ENCODE measurements at regions of chr16 and their contacts with region 1.

Region 1: GRCh38 chr16:19086322-19087199 is 19.1 kb downstream of the COQ7 start:
- DNase-seq: peak; percentile 83 to 88
- H3K4me3 ChIP-seq: peak overlapping the region; percentile 38 to 45
- H3K27ac ChIP-seq: no peak overlapping the region
- H3K4me1 ChIP-seq: peaks cover 0 to 12% (median 8%) of the 10 kb centered on the region in 4 donors
- H3K27me3 ChIP-seq: no peaks in the 10 kb centered on the region
- CTCF ChIP-seq: peak; percentile 97 to 100

Region 2: DNA sequence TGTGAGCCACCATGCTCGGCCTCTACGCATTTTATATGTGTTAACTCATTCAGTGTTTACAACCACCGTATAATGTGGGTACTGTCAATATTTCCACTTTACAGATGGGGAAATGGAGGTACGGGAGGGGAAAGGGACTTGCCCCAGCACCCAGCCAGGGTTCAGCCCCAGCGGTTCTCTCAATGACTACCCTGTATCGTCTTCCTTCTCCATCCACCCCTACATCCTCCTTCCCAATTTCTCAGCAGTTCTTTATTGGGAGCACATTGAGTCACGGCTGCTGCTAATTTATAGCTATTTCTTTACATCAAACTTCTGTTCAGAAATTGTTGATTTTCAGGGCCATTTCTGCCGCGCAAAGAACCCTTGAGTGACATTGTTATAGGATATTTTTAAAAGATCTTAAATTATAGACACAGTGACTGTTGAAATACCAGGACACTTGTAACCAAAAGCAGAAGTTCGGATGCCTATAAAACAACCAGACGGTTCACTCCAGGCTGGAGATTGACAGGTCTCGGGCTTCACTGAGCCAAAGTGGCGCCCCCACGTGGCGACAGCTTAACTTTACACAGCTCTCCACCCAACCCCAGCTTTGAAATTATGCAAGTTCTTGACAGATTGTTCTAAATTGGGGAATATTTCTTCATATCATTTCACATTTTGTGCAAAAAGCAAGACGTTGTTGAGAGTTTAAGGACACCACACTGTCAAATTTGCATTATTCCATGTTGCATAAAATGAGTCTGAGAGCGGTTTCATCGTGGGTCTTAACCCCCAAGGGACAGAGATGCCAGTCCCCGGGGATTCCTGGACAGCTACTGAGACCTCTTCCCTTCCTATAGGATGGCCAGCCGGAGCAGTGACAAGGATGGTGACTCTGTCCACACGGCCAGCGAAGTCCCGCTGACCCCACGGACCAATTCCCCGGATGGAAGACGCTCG is 93.3 kb after region 1 on chr16:
- intact Hi-C with region 1: loop called (anchors 5 kb)
- DNase-seq: peak; percentile 44 to 72
- H3K4me3 ChIP-seq: no peak overlapping the region
- H3K27ac ChIP-seq: no peak overlapping the region
- H3K4me1 ChIP-seq: peaks cover 0 to 7% (median 0%) of the 10 kb centered on the region in 4 donors
- H3K27me3 ChIP-seq: peaks cover 0 to 3% of the 10 kb centered on the region in 2 donors
- CTCF ChIP-seq: peak; percentile 37 to 43

Region 3: GRCh38 chr16:19363740-19364139 is 277.2 kb after region 1 on chr16:
- intact Hi-C with region 1: no loop called
- DNase-seq: no peak
- H3K4me3 ChIP-seq: no peak overlapping the region
- H3K27ac ChIP-seq: no peak overlapping the region
- H3K4me1 ChIP-seq: no peaks in the 10 kb centered on the region
- H3K27me3 ChIP-seq: peaks cover 0 to 8% of the 10 kb centered on the region in 2 donors
- CTCF ChIP-seq: no peak

Region 4: DNA sequence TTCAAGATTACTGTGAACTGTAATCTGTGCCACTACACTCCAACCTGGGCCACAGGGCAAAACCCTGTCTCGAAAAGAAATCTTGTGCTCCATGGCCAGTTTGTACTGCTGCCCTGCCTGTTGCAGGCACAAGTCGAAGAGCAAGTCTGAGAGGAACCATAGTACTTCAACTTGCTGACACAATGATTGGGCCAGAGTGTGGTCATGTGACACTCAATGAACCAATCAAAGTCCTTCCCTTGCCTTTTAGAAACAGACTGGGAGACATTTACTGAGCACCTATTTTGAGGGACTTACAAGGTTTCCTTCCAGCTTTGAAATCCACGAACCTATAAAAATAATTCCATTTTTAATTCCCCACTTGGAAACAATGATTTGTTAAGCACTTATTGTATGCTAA is 291.3 kb after region 1 on chr16:
- intact Hi-C with region 1: loop called (anchors 2 kb)
- DNase-seq: no peak
- H3K4me3 ChIP-seq: no peak overlapping the region
- H3K27ac ChIP-seq: no peak overlapping the region
- H3K4me1 ChIP-seq: no peaks in the 10 kb centered on the region
- H3K27me3 ChIP-seq: no peaks in the 10 kb centered on the region
- CTCF ChIP-seq: no peak

Region 5: DNA sequence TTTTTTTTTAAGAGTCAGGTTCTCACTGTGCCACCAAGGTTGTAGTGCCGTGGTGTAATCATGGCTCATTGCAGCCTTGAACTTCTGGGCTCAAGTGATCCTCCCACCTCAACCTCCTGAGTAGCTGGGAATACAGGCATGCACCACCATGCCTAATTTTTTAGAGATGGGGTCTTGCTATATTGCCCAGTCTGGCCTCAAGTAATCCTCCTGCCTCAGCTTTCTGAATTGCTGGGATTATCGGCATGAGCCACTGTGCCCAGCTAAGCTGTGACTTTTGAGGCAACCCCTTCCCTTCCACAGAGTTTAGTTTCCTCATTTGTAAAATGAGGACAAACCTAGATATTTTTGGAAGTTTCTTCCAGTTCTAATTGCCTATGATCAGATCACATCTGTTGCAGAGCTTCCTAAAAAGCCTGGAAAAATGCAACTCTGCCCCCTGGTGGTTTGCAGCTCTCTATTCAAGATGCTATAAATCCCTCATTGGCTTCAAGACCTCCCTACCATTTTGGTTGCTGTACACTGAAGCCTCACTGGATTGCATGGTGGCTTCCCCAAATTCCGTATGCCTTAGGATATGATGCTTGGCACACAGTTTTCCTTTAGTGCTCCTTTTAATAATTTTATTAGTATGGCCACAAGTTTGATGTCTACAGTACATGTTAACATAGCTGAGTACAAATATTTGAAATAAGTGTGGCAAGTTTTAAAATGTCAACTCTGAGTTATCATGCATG is 416.0 kb after region 1 on chr16:
- intact Hi-C with region 1: loop called (anchors 5 kb)
- DNase-seq: peak; percentile 60 to 69
- H3K4me3 ChIP-seq: no peak overlapping the region
- H3K27ac ChIP-seq: no peak overlapping the region
- H3K4me1 ChIP-seq: peaks cover 0 to 16% (median 13%) of the 10 kb centered on the region in 4 donors
- H3K27me3 ChIP-seq: no peaks in the 10 kb centered on the region
- CTCF ChIP-seq: peak; percentile 58 to 60